ENCODE measurements at regions of chr1 and their contacts with region 1.

Region 1: GRCh38 chr1:206635080-206635977 is at the start of gene DYRK3:
- DNase-seq: peak; percentile 99
- H3K4me3 Mint-ChIP-seq: peak within 1 kb of the TSS; percentile 87
- H3K27ac Mint-ChIP-seq: peak within 1 kb of the TSS; percentile 94
- H3K4me1 Mint-ChIP-seq: peaks cover 25% of the 10 kb centered on the region
- H3K27me3 Mint-ChIP-seq: peaks cover 10% of the 10 kb centered on the region
- total RNA-seq, gene DYRK3: 16.5 and 16.9 TPM in 2 replicates

Region 2: GRCh38 chr1:206590025-206590758 is 45.1 kb before region 1 on chr1:
- intact Hi-C with region 1: loop called (anchors 2 kb)
- DNase-seq: peak; percentile 90
- H3K4me3 Mint-ChIP-seq: peak overlapping the region; percentile 78
- H3K27ac Mint-ChIP-seq: peak overlapping the region; percentile 94
- H3K4me1 Mint-ChIP-seq: peaks cover 65% of the 10 kb centered on the region
- H3K27me3 Mint-ChIP-seq: no peaks in the 10 kb centered on the region

Region 3: DNA sequence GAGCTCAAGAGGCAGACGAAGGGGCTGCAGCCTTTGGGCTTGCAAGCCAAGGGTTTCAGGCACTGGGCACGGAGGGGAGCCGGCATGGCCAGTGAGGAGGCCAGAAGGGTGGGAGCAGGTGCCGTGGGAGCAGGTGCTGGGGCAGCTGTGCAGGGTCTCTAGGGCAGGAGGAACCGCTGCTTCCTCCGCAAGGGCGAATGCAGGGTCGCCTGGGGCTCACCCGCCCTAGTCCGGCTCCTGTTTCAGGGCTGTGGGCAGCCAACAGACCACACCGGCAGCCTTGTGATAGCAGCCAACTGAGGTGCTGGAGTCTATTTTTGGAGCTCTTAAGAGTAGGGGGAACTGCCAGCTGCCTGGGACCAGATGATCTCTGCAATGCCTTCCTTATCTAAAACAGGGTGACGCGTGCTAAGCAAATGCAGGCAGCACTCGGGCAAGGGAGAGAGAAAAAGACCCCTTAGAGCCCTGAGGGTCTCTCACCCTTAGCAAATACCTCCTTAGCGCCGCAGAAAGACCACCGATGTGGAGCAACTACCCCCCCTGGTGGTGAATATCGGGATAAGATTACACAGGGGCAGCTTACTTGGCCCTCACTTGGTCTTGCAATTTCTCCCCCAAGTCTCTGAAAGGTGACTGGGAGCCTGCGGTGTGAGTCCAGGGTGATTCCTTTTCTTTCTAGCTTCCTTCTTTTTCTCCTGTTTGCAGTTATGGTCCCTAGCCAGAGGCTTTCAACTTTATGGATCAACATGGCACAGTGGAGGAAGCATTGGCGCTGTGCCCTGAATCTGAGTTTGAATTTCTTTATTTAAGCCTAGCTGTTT is 28.7 kb after region 1 on chr1:
- intact Hi-C with region 1: loop called (anchors 1 kb)
- DNase-seq: peak; percentile 92
- H3K4me3 Mint-ChIP-seq: peak overlapping the region; percentile 57
- H3K27ac Mint-ChIP-seq: peak overlapping the region; percentile 39
- H3K4me1 Mint-ChIP-seq: peaks cover 34% of the 10 kb centered on the region
- H3K27me3 Mint-ChIP-seq: peaks cover 2% of the 10 kb centered on the region

Region 4: DNA sequence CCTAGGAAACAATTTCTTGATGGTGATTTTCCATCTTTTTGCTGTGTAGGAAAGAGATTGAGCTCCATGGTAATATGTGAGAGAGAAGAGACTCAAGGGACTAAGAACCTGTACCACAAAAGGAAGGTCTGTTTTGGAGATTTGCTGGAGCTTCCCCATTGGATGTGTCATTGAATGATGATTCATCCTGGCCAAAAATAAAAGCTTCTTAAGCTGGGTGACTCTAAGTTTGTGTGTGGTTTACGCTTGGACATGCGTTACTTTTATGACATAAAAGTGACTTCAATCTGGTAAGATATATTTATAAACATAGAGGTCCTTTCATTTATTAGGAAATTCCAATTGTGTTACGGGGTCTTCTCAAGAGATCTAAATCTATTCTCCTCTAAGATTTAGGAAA is 117.8 kb after region 1 on chr1:
- intact Hi-C with region 1: no loop called
- DNase-seq: no peak
- H3K4me3 Mint-ChIP-seq: no peak overlapping the region
- H3K27ac Mint-ChIP-seq: no peak overlapping the region
- H3K4me1 Mint-ChIP-seq: peaks cover 19% of the 10 kb centered on the region
- H3K27me3 Mint-ChIP-seq: peaks cover 42% of the 10 kb centered on the region

Region 5: GRCh38 chr1:206808615-206809014 is 173.3 kb after region 1 on chr1:
- intact Hi-C with region 1: loop called (anchors 2 kb)
- DNase-seq: peak; percentile 87
- H3K4me3 Mint-ChIP-seq: no peak overlapping the region
- H3K27ac Mint-ChIP-seq: peak overlapping the region; percentile 12
- H3K4me1 Mint-ChIP-seq: peaks cover 47% of the 10 kb centered on the region
- H3K27me3 Mint-ChIP-seq: peaks cover 8% of the 10 kb centered on the region

Region 6: DNA sequence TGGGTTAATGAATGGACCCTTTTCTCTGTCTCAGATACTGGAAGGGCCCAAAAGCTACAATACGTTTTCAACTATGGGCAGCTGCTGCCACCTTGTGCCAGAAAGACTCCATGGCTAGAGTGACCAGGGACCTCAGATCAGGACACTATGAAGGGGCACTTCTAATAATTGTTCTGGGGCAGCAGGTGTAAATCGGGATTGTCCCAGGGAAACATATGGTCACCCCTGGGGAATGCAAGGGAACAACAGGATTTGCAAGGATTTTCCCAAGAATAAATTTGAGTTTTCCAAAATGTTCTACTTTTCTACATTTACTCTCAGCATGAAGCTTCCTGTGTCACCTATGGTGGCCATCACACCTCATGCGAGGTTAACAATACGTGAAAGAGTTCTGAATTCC is 346.9 kb after region 1 on chr1:
- intact Hi-C with region 1: loop called (anchors 5 kb)
- DNase-seq: peak; percentile 90
- H3K4me3 Mint-ChIP-seq: no peak overlapping the region
- H3K27ac Mint-ChIP-seq: no peak overlapping the region
- H3K4me1 Mint-ChIP-seq: no peaks in the 10 kb centered on the region
- H3K27me3 Mint-ChIP-seq: peaks cover 52% of the 10 kb centered on the region